Activated CD8-positive, alpha-beta T cell treated with anti-CD3 and anti-CD28 coated beads for 36 hours (primary cell): ENCODE measurements at regions of chr6 and their contacts with region 1.

Region 1: GRCh38 chr6:29649701-29650673 is 6.9 kb upstream of the MOG start:
- DNase-seq: peak; percentile 99
- ATAC-seq: peak; percentile 97
- H3K4me3 Mint-ChIP-seq: peak overlapping the region; percentile 84
- H3K27ac Mint-ChIP-seq: peak overlapping the region; percentile 98
- H3K4me1 Mint-ChIP-seq: peaks cover 4% of the 10 kb centered on the region
- H3K27me3 Mint-ChIP-seq: peaks cover 3% of the 10 kb centered on the region
- CTCF ChIP-seq: peak; percentile 98

Region 2: GRCh38 chr6:28863604-28864320 is 786.2 kb before region 1 on chr6:
- CTCF ChIA-PET with region 1: no interaction called
- POLR2A ChIA-PET with region 1: no interaction called
- intact Hi-C with region 1: no loop called
- DNase-seq: peak; percentile 89
- ATAC-seq: peak; percentile 54
- H3K4me3 Mint-ChIP-seq: peak overlapping the region; percentile 89
- H3K27ac Mint-ChIP-seq: peak overlapping the region; percentile 84
- H3K4me1 Mint-ChIP-seq: peaks cover 30% of the 10 kb centered on the region
- H3K27me3 Mint-ChIP-seq: peaks cover 3% of the 10 kb centered on the region
- CTCF ChIP-seq: no peak

Region 3: DNA sequence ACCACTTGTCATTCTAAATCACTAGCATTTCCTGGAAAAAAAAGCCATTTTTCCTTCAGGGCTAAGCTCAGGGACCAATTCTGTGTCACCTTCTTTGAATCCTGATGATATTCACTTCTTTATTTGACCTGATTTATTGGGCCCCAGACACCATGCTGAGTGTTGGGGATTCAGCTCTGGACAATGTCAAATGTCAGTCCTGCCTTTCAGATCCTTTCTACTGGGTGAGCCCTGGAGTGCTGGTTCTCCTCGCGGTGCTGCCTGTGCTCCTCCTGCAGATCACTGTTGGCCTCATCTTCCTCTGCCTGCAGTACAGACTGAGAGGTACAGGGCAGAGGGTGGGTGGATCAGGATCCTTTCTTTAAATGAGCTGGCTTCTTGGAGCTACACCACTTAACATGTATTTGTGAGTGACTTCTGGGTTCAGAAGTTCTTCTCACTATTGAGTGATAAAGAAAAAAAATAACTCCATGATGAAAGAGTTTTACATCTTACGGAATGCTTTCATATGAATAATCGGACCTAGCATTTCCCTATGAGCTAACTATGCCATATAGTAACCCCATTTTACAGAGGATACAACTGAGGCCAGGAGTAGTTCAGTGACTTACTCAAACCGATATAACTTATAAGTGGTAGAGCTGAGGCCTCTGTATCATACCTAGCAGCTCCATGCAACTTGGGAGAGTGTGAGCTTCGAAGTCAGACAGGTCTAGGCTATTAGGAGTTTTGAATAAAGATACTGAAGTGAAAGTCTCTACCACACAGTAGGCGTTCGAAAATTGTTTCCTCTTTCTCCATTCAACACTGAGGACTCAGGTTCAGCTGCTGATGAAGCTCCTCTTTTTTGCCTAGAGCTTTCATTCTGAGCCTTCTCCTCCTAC is 16.2 kb after region 1 on chr6:
- CTCF ChIA-PET with region 1: interaction called, 140 read pairs
- POLR2A ChIA-PET with region 1: no interaction called
- intact Hi-C with region 1: no loop called
- DNase-seq: no peak
- ATAC-seq: no peak
- H3K4me3 Mint-ChIP-seq: no peak overlapping the region
- H3K27ac Mint-ChIP-seq: no peak overlapping the region
- H3K4me1 Mint-ChIP-seq: no peaks in the 10 kb centered on the region
- H3K27me3 Mint-ChIP-seq: peaks cover 21% of the 10 kb centered on the region
- CTCF ChIP-seq: no peak

Region 4: GRCh38 chr6:29705389-29706231 is 55.6 kb after region 1 on chr6:
- CTCF ChIA-PET with region 1: interaction called, 13 read pairs
- POLR2A ChIA-PET with region 1: no interaction called
- intact Hi-C with region 1: no loop called
- DNase-seq: no peak
- ATAC-seq: no peak
- H3K4me3 Mint-ChIP-seq: no peak overlapping the region
- H3K27ac Mint-ChIP-seq: no peak overlapping the region
- H3K4me1 Mint-ChIP-seq: peaks cover 51% of the 10 kb centered on the region
- H3K27me3 Mint-ChIP-seq: peaks cover 16% of the 10 kb centered on the region
- CTCF ChIP-seq: peak; percentile 79

Region 5: GRCh38 chr6:29752451-29753308 is 102.7 kb after region 1 on chr6:
- CTCF ChIA-PET with region 1: interaction called, 15 read pairs
- POLR2A ChIA-PET with region 1: no interaction called
- intact Hi-C with region 1: loop called (anchors 2 kb)
- DNase-seq: peak; percentile 91
- ATAC-seq: peak; percentile 77
- H3K4me3 Mint-ChIP-seq: peak overlapping the region; percentile 89
- H3K27ac Mint-ChIP-seq: peak overlapping the region; percentile 92
- H3K4me1 Mint-ChIP-seq: peaks cover 30% of the 10 kb centered on the region
- H3K27me3 Mint-ChIP-seq: no peaks in the 10 kb centered on the region
- CTCF ChIP-seq: peak; percentile 99

Region 6: DNA sequence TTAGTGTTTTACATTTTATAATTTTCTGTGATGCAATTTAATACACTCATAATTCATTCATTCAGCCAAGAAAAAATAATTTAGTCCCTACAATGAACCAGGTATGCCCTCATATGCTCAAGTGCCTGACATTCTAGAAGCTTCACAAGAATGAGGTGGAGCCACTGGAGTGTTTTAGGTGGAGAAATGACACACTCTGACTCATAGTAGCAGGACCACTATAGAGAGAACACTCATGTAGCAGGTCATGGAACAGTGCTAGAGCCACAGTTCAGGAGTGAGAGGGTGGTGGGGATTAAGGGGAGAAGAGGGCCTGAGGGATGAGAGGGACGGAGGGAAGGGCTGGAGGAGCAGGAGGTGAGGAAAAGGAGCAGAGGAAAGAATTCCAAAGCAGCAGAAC is 176.3 kb after region 1 on chr6:
- CTCF ChIA-PET with region 1: interaction called, 16 read pairs
- POLR2A ChIA-PET with region 1: no interaction called
- intact Hi-C with region 1: no loop called
- DNase-seq: no peak
- ATAC-seq: peak; percentile 60
- H3K4me3 Mint-ChIP-seq: no peak overlapping the region
- H3K27ac Mint-ChIP-seq: no peak overlapping the region
- H3K4me1 Mint-ChIP-seq: peaks cover 2% of the 10 kb centered on the region
- H3K27me3 Mint-ChIP-seq: peaks cover 49% of the 10 kb centered on the region
- CTCF ChIP-seq: no peak